ENCODE measurements at regions of chr1 and their contacts with region 1.

Region 1: DNA sequence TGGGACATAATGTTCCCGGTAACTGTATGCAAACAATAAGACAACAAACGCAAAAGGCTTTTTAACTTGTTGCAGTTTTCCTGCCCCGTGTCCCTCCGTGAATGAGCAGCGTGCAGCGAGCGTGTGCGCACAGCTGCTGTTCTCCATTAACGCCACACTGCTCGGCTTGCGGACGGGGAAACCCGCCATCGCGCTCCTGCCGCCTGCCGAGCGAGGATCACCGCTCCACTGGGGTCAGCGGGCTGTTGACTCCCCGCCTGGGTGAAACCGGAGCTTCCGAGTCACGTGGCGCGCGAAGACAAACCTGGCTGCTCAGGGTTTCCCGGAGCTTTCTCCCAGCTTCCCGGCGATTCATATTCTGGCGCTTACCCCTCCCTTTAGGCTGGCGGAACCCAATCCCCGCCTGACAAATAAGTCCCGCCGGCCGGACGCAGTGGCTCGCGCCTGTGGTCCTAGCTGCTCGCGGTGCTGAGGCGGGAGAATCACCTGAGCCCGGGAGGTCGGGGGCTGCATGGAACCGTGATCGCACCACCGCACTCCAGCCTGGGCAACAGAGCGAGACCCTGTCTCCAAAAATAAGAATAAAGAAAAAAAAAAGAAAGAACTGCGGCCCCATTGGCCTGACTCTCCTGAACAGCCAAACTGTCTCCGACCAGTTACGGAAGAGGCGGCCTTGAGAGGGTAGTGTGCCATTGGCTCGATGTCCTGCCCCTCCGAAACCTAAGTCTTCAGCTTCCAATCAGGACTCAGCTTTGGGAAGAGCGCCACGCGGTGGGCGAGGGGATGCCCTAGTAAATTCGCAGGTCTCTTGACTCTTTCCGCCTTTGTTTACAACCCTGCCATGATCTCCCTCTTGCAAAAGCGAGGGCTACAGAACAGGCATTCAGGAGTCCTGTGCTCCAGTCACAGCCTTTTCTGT is at the start of gene CREB3L4:
- DNase-seq: peak in 1 of 2 experiments; percentile 90
- H3K4me3 ChIP-seq: peak within 1 kb of the TSS; percentile 51 to 77 (median 66)
- H3K27ac ChIP-seq: peak within 1 kb of the TSS; percentile 91
- H3K4me1 ChIP-seq: peaks cover 0 to 12% (median 6%) of the 10 kb centered on the region in 4 experiments; a peak in 5 of 7 replicates
- H3K27me3 ChIP-seq: no peaks in the 10 kb centered on the region
- CTCF ChIP-seq: peak in 2 of 3 experiments; percentile 37 to 51; a peak in 2 of 4 replicates
- EP300 ChIP-seq: no peak
- POLR2A ChIP-seq: peak; percentile 78 to 82
- RAD21 ChIP-seq: peak; percentile 6 to 11; a peak in 1 of 4 replicates
- total RNA-seq, gene CREB3L4: 34.4 and 37.2 TPM in 2 replicates

Region 2: GRCh38 chr1:153936011-153936802 is 31.1 kb before region 1 on chr1:
- CTCF ChIA-PET with region 1: interaction called, 3 read pairs
- POLR2A ChIA-PET with region 1: interaction called, 10 read pairs
- DNase-seq: no peak
- H3K4me3 ChIP-seq: no peak overlapping the region
- H3K27ac ChIP-seq: no peak overlapping the region
- H3K4me1 ChIP-seq: no peaks in the 10 kb centered on the region
- H3K27me3 ChIP-seq: no peaks in the 10 kb centered on the region
- CTCF ChIP-seq: no peak
- EP300 ChIP-seq: no peak
- POLR2A ChIP-seq: no peak
- RAD21 ChIP-seq: no peak

Region 3: GRCh38 chr1:153951801-153952200 is 15.5 kb before region 1 on chr1:
- CTCF ChIA-PET with region 1: interaction called, 13 read pairs
- POLR2A ChIA-PET with region 1: interaction called, 156 read pairs
- DNase-seq: no peak
- H3K4me3 ChIP-seq: no peak overlapping the region
- H3K27ac ChIP-seq: no peak overlapping the region
- H3K4me1 ChIP-seq: peaks cover 0 to 8% (median 2%) of the 10 kb centered on the region in 4 experiments; a peak in 4 of 7 replicates
- H3K27me3 ChIP-seq: no peaks in the 10 kb centered on the region
- CTCF ChIP-seq: no peak
- EP300 ChIP-seq: no peak
- POLR2A ChIP-seq: no peak
- RAD21 ChIP-seq: no peak

Region 4: GRCh38 chr1:153977250-153978240 is 10.2 kb after region 1 on chr1 and contains the start of gene JTB:
- CTCF ChIA-PET with region 1: interaction called, 29 read pairs
- POLR2A ChIA-PET with region 1: interaction called, 224 read pairs
- DNase-seq: peak in 1 of 2 experiments; percentile 88
- H3K4me3 ChIP-seq: peak within 1 kb of the TSS; percentile 91 to 99 (median 93)
- H3K27ac ChIP-seq: peak within 1 kb of the TSS; percentile 66
- H3K4me1 ChIP-seq: no peaks in the 10 kb centered on the region; a peak in 1 of 7 replicates
- H3K27me3 ChIP-seq: no peaks in the 10 kb centered on the region
- CTCF ChIP-seq: no peak
- EP300 ChIP-seq: no peak
- POLR2A ChIP-seq: peak; percentile 76 to 78
- RAD21 ChIP-seq: no peak
- total RNA-seq, gene JTB: 91.1 and 93.0 TPM in 2 replicates